Esophagus muscularis mucosa (tissue), 4 donors: ENCODE measurements at regions of chr1 and their contacts with region 1.

Region 1: GRCh38 chr1:223133824-223134435 is 9.1 kb downstream of the TLR5 start:
- DNase-seq: no peak
- H3K4me3 ChIP-seq: peak overlapping the region; percentile 38 to 61 (median 43)
- H3K27ac ChIP-seq: peak overlapping the region; percentile 58 to 80 (median 72)
- H3K4me1 ChIP-seq: peaks cover 20 to 60% (median 57%) of the 10 kb centered on the region in 4 donors
- H3K27me3 ChIP-seq: no peaks in the 10 kb centered on the region
- CTCF ChIP-seq: peak; percentile 92 to 98 (median 95)
- EP300 ChIP-seq: no peak
- POLR2A ChIP-seq: no peak

Region 2: DNA sequence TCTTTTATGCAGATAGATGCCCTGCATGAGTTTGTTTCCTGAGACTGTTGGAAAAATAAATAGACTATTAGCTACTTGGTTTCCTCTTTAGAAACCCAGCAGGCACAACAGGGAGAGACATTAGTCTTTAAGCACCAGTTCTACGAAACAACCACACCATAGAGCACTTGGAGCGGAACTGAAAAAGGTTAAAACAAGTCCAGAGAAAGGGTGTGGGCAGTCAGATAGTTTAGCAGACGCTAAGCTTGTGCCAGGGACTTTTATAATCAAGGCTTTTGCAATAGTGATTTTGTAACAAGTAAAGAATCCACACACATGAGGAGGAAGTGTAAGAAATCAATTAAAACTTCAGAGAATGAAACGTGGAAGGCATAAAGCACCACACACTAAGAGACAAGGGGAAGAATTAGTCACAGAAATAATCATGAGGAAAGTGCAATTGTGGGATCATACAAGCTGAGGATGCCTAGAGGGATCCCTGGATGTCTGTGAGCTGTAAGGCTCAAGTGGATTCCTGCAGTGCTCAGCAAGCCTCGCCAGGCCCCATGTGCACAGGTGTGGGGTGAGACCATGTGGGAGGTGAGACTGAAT is 46.9 kb after region 1 on chr1:
- intact Hi-C with region 1: no loop called
- DNase-seq: peak; percentile 5
- H3K4me3 ChIP-seq: no peak overlapping the region
- H3K27ac ChIP-seq: peak overlapping the region in 3 of 4 donors; percentile 26 to 56 (median 31)
- H3K4me1 ChIP-seq: peaks cover 3 to 13% (median 4%) of the 10 kb centered on the region in 4 donors
- H3K27me3 ChIP-seq: no peaks in the 10 kb centered on the region
- CTCF ChIP-seq: no peak
- EP300 ChIP-seq: no peak
- POLR2A ChIP-seq: no peak

Region 3: DNA sequence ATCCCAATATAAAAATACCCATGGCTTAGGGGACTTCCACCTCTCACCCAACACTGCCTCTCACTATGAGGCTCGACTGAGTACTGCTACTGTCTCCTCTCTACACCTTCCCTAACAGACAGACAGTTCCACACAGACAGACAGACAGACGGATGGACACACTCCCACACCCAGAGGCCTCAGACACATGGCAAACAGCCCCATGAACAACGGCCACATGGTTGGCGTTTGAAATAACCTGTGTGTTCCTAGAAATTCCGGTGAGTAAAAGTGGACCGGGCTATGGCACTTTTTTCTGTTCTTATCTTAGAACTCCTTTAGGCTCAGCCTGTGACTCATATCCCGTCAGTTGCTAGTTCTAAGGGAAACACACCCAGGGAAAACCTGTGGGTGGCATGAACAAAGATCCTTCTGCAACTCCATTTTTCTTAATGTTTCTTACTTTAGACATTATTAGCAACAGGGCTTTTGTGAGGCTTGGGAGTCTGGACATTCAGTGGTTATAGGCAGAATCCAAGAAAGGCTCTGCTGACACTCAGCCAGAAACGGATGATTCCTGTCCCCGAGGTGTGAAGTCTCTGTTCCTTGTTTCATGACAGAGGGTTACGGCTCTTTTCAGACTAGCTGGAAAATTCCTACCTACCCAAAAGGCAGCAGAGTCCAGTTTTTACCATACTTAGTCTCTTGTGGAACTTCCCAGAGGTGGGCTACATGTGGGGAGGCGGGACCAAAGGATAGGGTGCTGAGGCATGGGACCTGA is 99.7 kb after region 1 on chr1:
- intact Hi-C with region 1: loop called (anchors 5 kb)
- DNase-seq: no peak
- H3K4me3 ChIP-seq: peak overlapping the region in 1 of 4 donors; percentile 4
- H3K27ac ChIP-seq: peak overlapping the region; percentile 54 to 67 (median 62)
- H3K4me1 ChIP-seq: peaks cover 17 to 27% (median 20%) of the 10 kb centered on the region in 4 donors
- H3K27me3 ChIP-seq: no peaks in the 10 kb centered on the region
- CTCF ChIP-seq: no peak
- EP300 ChIP-seq: no peak
- POLR2A ChIP-seq: no peak

Region 4: GRCh38 chr1:223363856-223364684 is 230.1 kb after region 1 on chr1 and contains the start of gene SUSD4:
- intact Hi-C with region 1: loop called (anchors 10 kb)
- DNase-seq: no peak
- H3K4me3 ChIP-seq: peak within 1 kb of the TSS; percentile 56 to 71 (median 61)
- H3K27ac ChIP-seq: peak within 1 kb of the TSS in 3 of 4 donors; percentile 27 to 61 (median 51)
- H3K4me1 ChIP-seq: peaks cover 13 to 30% (median 23%) of the 10 kb centered on the region in 4 donors
- H3K27me3 ChIP-seq: peaks cover 0 to 33% (median 0%) of the 10 kb centered on the region in 4 donors
- CTCF ChIP-seq: no peak
- EP300 ChIP-seq: no peak
- POLR2A ChIP-seq: no peak
- total RNA-seq, gene SUSD4: 1.1 to 3.3 (median 1.8) TPM

Region 5: DNA sequence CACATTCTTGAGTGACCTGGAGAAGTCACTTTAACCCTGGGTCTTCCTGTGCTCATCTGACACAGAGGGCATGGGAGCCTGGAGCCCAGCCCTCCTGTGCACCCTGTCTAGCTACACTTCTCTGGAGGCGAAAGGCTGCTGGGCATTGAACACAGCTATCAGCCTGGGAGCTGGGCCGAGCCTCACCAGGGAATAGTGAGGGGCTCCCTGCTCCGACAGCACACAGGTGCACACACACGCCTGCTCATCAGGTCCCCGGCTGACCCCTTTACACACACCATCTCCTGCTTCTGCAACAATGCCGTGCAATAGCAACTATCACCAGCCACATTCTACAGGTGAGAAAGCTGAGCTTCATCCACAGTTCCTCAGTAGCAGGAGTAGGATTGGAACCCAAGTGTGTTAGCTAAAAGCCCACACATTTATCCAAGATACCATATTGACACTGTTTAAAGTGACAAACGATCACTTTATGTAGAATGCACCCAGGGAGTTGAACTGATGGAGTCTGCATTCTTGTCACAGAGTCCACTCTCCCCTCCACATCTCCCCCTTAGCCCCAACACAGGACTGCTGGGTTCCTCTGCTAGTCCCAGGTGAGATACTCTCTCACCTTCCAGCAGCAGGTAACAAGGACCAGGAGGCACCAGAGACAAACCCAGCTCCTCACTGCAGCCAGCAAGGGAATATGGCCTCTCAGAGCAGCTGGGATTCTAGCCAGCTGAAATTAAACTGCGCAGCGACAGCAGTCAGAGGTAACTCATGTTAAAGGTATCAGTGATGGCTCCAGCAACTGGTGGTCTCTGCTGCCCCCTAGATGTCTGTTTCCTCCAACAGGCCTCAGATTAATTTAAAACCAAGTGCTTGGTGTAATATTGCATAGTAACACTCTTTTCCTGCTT is 549.9 kb after region 1 on chr1:
- intact Hi-C with region 1: loop called (anchors 5 kb)
- DNase-seq: no peak
- H3K4me3 ChIP-seq: no peak overlapping the region
- H3K27ac ChIP-seq: no peak overlapping the region
- H3K4me1 ChIP-seq: no peaks in the 10 kb centered on the region
- H3K27me3 ChIP-seq: peaks cover 0 to 2% (median 0%) of the 10 kb centered on the region in 4 donors
- CTCF ChIP-seq: peak; percentile 49 to 59 (median 55)
- EP300 ChIP-seq: no peak
- POLR2A ChIP-seq: no peak